ENCODE measurements at regions of chr15 and their contacts with region 1.

Region 1: DNA sequence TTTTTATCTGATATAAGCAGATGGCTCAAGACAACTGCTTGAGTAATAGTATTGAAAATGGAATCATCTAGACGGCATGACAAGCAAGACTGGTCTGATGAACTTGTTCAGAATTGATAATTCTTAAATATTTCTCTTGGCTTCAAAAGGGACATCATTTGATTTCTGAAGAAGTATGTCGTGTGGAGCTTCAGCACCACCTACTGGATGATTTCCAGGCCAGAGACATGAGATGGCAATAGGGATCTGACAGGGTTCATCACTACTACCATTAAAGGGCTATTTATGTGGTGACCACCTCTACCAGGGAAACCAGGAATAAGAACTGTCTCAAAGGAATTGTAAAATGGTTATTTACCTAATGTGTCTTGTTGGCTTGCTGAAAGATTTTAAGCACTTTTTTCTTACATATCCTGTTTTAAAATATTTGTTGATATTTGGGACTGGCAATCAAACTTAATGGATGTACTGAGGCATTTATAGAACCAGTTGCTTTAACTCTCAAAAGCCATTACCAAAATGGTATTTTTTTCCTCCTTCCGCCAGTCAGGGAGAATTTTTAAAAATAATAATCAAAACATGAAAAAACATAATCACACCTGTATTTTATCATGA is 99.5 kb upstream of the FAM98B start:
- DNase-seq: peak; percentile 73
- ATAC-seq: peak; percentile 33
- H3K4me3 ChIP-seq: no peak overlapping the region
- H3K4me3 Mint-ChIP-seq: no peak overlapping the region
- H3K27ac ChIP-seq: no peak overlapping the region
- H3K27ac Mint-ChIP-seq: no peak overlapping the region
- H3K4me1 ChIP-seq: no peaks in the 10 kb centered on the region
- H3K4me1 Mint-ChIP-seq: no peaks in the 10 kb centered on the region
- H3K27me3 ChIP-seq: no peaks in the 10 kb centered on the region
- H3K27me3 Mint-ChIP-seq: no peaks in the 10 kb centered on the region
- CTCF ChIP-seq: peak; percentile 90

Region 2: DNA sequence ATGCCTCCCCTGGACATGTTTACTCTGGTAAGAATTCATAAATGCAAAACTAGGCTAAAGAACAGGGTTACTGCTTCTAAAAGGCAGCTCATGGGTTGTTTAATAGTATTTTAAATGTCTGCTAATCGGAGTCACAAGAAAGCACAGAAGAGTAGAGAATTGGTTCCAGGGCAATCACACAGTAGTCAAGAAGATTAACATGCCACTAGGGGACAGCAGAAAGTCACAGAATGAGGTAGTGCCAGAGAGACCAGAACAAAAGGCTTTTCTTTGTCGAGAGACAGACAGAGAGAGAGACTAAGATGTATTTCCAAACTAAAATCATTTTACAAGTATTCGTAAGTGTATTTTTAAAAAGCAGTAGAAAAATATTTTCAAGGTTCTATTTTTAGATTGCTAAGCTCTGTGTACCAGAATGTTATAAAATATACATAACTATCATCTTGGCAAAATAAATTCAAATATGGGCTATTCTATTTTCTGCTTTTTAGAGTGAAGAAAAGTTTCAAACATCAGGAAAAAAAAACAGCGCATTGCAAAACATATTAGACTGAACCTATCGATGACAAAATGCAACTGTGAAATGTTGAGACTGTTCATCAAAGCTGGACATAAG is 1853.3 kb before region 1 on chr15:
- CTCF ChIA-PET with region 1: no interaction called
- POLR2A ChIA-PET with region 1: no interaction called
- intact Hi-C with region 1: loop called (anchors 2 kb)
- DNase-seq: peak; percentile 29
- ATAC-seq: no peak
- H3K4me3 ChIP-seq: no peak overlapping the region
- H3K4me3 Mint-ChIP-seq: no peak overlapping the region
- H3K27ac ChIP-seq: no peak overlapping the region
- H3K27ac Mint-ChIP-seq: no peak overlapping the region
- H3K4me1 ChIP-seq: no peaks in the 10 kb centered on the region
- H3K4me1 Mint-ChIP-seq: no peaks in the 10 kb centered on the region
- H3K27me3 ChIP-seq: no peaks in the 10 kb centered on the region
- H3K27me3 Mint-ChIP-seq: peaks cover 10% of the 10 kb centered on the region
- CTCF ChIP-seq: peak; percentile 65

Region 3: DNA sequence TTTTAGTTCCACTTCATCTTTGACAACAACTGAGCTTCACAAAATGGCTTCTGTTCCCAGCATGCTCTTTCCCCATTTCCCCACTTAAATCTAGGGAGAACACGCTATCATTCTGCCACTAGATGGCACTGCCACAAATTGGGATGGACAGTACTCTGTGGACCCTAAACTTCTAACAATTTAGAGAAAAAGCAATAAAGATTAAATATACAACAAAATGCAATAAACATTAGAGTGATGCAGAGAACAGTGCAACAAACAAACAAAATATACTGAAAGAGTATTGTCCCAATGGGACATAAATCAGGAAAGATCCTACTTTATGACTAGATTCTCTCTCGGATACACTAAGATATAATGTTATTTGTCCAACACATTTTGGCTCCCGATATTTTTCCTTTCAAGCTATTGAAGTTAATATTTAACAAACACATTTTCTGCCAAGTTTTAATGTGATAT is 589.7 kb before region 1 on chr15:
- CTCF ChIA-PET with region 1: interaction called, 11 read pairs
- POLR2A ChIA-PET with region 1: no interaction called
- intact Hi-C with region 1: no loop called
- DNase-seq: peak; percentile 29
- ATAC-seq: peak; percentile 47
- H3K4me3 ChIP-seq: no peak overlapping the region
- H3K4me3 Mint-ChIP-seq: no peak overlapping the region
- H3K27ac ChIP-seq: no peak overlapping the region
- H3K27ac Mint-ChIP-seq: no peak overlapping the region
- H3K4me1 ChIP-seq: peaks cover 0 to 6% of the 10 kb centered on the region in 2 donors
- H3K4me1 Mint-ChIP-seq: peaks cover 15% of the 10 kb centered on the region
- H3K27me3 ChIP-seq: no peaks in the 10 kb centered on the region
- H3K27me3 Mint-ChIP-seq: no peaks in the 10 kb centered on the region
- CTCF ChIP-seq: peak; percentile 56

Region 4: DNA sequence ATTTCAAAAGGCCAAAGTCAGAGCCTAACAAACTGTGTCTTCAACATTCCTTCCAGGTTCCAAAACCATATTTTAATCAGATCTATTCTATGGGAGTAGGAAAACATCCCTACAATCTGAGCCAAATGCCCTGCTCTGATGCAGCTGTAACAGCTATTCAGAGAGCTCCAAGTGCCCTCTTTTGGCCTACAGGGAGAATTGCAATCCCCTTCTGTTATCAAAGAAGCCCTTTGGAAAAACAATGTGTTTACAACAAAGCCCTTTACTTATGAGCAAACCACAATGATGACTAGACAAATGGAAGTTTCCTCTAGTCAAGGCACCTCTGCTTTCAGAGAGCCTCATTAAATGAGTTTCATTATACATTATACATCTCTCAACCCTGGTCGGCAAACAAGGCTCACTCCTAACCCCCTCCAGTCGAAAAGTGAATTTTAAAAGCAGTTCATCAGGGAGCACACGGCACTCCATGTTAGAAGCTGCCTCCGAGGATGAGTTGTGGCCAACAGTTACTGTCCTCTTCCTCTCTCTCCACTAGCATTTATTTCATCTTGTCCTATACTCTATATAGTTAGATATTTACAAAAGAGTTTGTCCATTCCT is 462.6 kb before region 1 on chr15:
- CTCF ChIA-PET with region 1: no interaction called
- POLR2A ChIA-PET with region 1: no interaction called
- intact Hi-C with region 1: loop called (anchors 5 kb)
- DNase-seq: peak; percentile 5
- ATAC-seq: no peak
- H3K4me3 ChIP-seq: no peak overlapping the region
- H3K4me3 Mint-ChIP-seq: no peak overlapping the region
- H3K27ac ChIP-seq: no peak overlapping the region
- H3K27ac Mint-ChIP-seq: no peak overlapping the region
- H3K4me1 ChIP-seq: no peaks in the 10 kb centered on the region
- H3K4me1 Mint-ChIP-seq: no peaks in the 10 kb centered on the region
- H3K27me3 ChIP-seq: no peaks in the 10 kb centered on the region
- H3K27me3 Mint-ChIP-seq: peaks cover 14% of the 10 kb centered on the region
- CTCF ChIP-seq: peak; percentile 67

Region 5: DNA sequence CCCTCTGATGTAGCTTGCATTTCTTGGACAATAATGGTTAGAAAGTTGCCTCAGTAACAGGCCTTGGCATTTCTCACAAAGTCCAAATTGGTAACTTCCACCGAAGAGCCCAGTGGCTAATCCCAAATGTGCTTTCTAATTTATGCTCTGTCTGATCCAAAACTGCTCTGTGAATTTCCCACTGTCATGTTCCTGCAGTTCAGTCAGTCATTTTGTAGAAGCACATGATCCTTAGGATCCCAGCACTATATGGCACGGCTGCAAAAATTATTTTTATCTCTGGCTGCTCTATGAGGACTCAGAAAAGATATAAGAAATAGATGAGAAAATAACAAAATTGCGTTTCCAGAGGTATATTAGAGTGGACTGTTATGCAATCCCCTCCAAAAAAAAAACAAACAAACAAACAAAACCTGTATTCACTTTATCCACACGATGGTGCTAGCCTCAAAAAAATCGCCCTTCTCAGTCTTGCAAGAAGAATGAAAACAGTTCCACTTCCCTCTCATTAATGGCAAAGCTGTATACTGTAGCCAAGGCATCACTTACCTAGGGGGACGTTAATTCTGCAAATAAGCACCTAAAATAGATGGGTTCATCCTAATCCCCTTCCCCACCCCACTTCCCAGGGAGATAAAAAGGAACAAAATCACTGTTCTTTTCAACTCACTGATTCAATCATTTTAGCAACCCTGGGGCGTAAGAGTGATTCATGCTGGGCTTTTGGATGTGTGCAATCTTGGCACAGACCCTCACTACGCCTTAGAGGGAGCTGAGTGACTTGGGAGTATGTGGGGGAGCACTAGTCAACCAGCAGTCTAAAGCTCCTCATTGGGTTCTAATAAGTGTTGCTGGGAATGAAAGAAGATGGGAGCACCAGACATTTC is 358.7 kb before region 1 on chr15:
- CTCF ChIA-PET with region 1: interaction called, 74 read pairs
- POLR2A ChIA-PET with region 1: no interaction called
- intact Hi-C with region 1: loop called (anchors 1 kb)
- DNase-seq: peak; percentile 49
- ATAC-seq: no peak
- H3K4me3 ChIP-seq: no peak overlapping the region
- H3K4me3 Mint-ChIP-seq: no peak overlapping the region
- H3K27ac ChIP-seq: no peak overlapping the region
- H3K27ac Mint-ChIP-seq: no peak overlapping the region
- H3K4me1 ChIP-seq: no peaks in the 10 kb centered on the region
- H3K4me1 Mint-ChIP-seq: no peaks in the 10 kb centered on the region
- H3K27me3 ChIP-seq: no peaks in the 10 kb centered on the region
- H3K27me3 Mint-ChIP-seq: peaks cover 40% of the 10 kb centered on the region
- CTCF ChIP-seq: peak; percentile 65

Region 6: DNA sequence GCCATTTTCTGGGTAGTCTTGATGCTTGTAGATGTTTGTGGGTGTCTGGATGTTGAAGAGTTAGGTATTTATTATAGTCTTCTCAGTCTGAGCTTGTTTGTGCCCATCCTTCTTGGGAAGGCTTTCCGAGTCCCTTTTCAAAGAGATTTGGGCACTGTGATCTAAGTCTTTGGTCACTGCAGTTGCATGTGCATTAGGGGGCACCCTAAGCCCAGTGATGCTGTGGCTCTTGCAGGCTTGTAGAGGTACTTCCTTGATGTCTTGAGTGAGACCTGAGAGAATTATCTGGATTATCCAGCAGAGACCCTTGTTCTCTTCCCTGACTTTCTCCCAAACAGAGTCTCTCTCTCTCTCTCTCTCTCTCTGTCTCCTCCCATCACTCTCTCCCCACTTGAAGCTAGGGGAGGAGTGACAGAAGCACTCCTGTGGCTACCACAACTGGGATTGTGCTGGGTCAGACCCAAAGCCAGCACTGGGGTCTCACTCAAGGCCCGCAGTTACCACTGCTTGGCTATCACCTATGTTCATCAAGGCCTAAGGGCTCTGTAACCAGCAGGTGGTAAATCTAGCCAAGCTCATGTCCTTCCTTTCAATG is 351.4 kb before region 1 on chr15:
- CTCF ChIA-PET with region 1: interaction called, 11 read pairs
- POLR2A ChIA-PET with region 1: no interaction called
- intact Hi-C with region 1: loop called (anchors 1 kb)
- DNase-seq: peak; percentile 39
- ATAC-seq: no peak
- H3K4me3 ChIP-seq: no peak overlapping the region
- H3K4me3 Mint-ChIP-seq: no peak overlapping the region
- H3K27ac ChIP-seq: no peak overlapping the region
- H3K27ac Mint-ChIP-seq: no peak overlapping the region
- H3K4me1 ChIP-seq: no peaks in the 10 kb centered on the region
- H3K4me1 Mint-ChIP-seq: no peaks in the 10 kb centered on the region
- H3K27me3 ChIP-seq: peaks cover 0 to 2% (median 0%) of the 10 kb centered on the region in 4 experiments
- H3K27me3 Mint-ChIP-seq: peaks cover 20% of the 10 kb centered on the region
- CTCF ChIP-seq: peak; percentile 36

Region 7: DNA sequence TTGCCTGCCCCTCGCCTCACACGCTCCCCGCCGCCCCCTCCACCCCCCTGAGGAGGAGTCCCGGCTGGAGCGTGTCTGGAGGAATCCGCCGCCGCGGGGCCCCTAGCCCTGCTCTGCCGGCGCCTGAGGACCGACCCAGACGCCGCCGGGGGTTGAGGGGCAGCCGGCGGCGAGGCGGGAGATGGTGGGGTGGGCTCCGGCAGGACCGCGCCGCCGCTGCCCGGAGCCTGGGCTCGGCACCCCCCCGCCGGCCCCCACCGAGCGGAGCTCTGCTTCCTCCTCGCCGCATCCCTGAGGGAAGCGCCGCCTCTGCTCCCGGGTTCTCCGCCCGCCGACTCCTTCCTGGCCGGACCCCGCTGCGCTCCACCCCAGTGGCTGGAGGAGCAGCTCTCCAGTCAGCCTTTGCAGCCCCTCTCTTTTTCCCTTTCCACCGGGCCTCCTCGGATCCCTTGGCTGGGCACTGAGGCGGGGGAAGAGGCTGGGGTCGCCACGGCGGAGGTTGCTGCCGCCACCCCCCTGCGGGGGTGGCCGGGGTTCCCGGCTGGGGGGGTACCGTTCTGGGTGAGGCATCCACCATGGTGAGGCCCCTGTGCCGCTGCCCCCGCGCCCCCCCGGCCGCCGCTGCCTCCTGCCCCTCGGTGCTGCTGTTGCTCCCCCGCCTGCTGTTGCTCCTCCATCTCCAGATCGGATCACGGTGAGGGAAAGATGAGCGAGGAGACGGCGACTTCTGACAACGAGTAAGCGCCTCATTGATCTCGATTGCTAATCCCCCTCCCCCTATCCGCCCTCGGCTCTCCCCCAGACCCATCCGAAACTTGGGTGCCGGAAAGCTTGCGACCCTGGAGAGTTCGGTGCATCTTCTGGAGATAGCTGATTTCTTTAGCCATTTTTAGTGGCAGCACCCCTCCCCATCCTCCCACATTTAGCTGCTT is 101.7 kb before region 1 on chr15 and contains the start of gene SPRED1:
- CTCF ChIA-PET with region 1: interaction called, 5 read pairs
- POLR2A ChIA-PET with region 1: no interaction called
- intact Hi-C with region 1: loop called (anchors 1 kb)
- DNase-seq: no peak
- ATAC-seq: peak; percentile 9
- H3K4me3 ChIP-seq: peak within 1 kb of the TSS; percentile 57 to 93 (median 79)
- H3K4me3 Mint-ChIP-seq: peak within 1 kb of the TSS; percentile 90
- H3K27ac ChIP-seq: peak within 1 kb of the TSS in 1 of 2 donors; percentile 19
- H3K27ac Mint-ChIP-seq: peak within 1 kb of the TSS; percentile 84
- H3K4me1 ChIP-seq: peaks cover 21 to 28% of the 10 kb centered on the region in 2 donors
- H3K4me1 Mint-ChIP-seq: peaks cover 34% of the 10 kb centered on the region
- H3K27me3 ChIP-seq: peaks cover 0 to 14% (median 4%) of the 10 kb centered on the region in 4 experiments
- H3K27me3 Mint-ChIP-seq: peaks cover 11% of the 10 kb centered on the region
- CTCF ChIP-seq: no peak
- total RNA-seq, gene SPRED1: 1.2 and 2.1 TPM in 2 replicates